AG04449 (cell line): ENCODE measurements at regions of chr7 and their contacts with region 1.

Region 1: DNA sequence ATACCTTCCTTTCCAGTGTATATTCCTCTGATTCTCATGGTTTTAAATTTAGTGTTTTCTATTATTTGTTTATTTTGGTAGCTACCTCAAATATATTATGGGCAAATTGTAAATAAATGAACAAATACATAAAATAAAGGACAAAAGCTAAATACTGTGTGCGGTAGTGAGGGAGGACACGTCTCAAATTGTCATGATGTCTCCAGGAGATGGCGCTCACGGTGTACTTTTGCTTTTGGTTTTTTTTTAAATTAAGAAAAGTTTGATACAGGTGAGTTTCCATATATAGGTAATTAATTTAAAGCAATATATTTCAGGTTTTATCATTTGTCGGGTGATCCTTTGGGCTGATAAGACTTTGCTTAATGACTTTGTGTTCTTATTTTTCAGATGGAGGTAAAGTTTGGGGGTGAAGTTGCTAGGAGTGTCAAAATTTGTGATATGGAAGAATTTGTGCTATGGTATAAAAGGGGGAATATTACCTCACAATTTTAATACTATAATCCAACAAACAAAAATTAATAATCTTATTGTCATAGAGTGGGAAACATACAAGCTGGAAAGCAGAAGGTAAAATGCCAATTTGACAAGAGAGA is 68.4 kb upstream of the TMEM229A start:
- DNase-seq: no peak
- H3K4me3 ChIP-seq: no peak overlapping the region
- CTCF ChIP-seq: no peak

Region 2: DNA sequence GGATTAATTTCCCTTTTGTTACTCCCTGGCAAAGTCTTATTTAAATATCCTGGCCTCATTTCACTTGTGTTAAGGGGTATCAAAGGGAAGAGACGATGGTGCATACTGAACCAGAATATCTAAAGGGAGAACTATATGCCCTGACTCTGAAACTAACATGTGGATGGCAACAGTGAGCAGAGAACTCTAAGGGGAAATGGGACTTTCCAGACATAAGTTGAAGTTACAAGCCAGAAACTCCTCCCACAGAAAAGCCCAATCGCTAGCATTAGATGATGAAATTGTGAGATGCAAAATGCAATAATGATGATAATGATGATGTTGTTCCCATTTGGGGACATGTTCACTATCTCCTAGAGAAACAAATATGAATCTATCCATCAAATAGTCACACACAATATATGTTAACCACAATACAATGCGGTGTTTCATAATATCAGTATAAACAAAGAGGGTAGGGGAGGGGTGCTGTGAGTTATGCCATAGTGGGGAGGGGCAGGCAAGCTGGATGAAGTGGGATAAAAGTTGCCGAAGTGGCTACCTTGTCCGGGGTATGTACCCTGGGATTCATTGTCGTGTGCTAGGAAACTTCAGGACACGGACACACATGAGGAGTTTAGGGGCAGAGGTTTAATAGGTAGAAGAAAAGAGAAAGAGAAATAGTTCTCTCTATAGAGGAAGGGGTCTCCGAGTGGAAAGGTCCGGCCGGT is 105.5 kb before region 1 on chr7:
- CTCF ChIA-PET with region 1: no interaction called
- POLR2A ChIA-PET with region 1: no interaction called
- DNase-seq: no peak
- H3K4me3 ChIP-seq: no peak overlapping the region
- CTCF ChIP-seq: no peak

Region 3: GRCh38 chr7:124113045-124113444 is 11.8 kb after region 1 on chr7:
- CTCF ChIA-PET with region 1: interaction called, 11 read pairs
- POLR2A ChIA-PET with region 1: no interaction called
- DNase-seq: no peak
- H3K4me3 ChIP-seq: no peak overlapping the region
- CTCF ChIP-seq: no peak

Region 4: DNA sequence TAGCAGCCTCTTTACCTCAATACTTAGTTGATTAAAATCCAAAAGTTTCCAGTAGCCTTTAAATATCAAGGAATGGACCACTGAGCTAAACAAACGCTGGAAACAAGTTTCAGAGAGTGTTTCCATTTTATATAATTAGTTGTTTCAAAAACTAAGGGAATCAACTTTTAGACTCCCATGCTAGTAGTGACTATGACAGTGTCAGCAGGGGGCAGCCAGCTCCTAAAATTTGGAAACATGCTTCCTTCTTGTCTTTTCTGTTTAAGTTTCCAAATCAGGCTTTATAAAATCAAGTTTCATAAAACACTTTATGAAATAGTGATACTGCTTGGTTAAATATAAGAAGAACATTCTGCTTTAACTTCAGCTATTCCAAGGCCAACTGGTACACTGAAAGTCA is 69.8 kb after region 1 on chr7:
- CTCF ChIA-PET with region 1: no interaction called
- POLR2A ChIA-PET with region 1: no interaction called
- DNase-seq: peak; percentile 4
- H3K4me3 ChIP-seq: no peak overlapping the region
- CTCF ChIP-seq: peak; percentile 32

Region 5: DNA sequence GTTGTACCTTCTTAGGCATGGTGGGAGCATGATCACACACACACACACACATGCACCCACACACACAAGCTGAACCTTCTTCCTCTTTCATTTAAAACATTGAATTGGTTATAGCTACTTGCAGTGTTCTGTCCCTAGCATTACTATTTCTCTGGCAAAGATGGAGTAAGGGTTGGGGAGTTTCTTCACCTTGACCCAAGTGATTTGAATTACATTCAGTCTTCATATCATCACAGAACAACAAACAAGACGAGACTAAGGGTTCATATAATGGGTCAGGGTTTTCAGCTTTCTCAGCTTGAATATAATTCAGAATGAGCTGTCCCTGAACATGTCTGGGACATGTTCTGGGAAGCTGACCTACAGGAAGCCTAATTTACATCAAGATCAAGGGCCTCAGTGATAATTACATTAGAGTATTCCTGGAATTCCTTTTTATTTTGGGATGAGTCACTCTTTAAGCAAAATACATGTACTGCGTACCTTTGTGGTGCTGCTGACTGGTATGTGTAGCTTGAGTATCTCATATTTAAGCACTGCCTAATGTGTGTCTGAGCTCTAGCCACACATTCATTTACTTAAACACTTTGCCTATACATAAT is 145.1 kb after region 1 on chr7:
- CTCF ChIA-PET with region 1: no interaction called
- POLR2A ChIA-PET with region 1: no interaction called
- DNase-seq: no peak
- H3K4me3 ChIP-seq: no peak overlapping the region
- CTCF ChIP-seq: no peak

Region 6: GRCh38 chr7:124856299-124856888 is 755.1 kb after region 1 on chr7:
- CTCF ChIA-PET with region 1: interaction called, 12 read pairs
- POLR2A ChIA-PET with region 1: no interaction called
- DNase-seq: no peak
- H3K4me3 ChIP-seq: no peak overlapping the region
- CTCF ChIP-seq: peak; percentile 33